Sciatic nerve (tissue), 2 donors: ENCODE measurements at regions of chr4 and their contacts with region 1.

Region 1: DNA sequence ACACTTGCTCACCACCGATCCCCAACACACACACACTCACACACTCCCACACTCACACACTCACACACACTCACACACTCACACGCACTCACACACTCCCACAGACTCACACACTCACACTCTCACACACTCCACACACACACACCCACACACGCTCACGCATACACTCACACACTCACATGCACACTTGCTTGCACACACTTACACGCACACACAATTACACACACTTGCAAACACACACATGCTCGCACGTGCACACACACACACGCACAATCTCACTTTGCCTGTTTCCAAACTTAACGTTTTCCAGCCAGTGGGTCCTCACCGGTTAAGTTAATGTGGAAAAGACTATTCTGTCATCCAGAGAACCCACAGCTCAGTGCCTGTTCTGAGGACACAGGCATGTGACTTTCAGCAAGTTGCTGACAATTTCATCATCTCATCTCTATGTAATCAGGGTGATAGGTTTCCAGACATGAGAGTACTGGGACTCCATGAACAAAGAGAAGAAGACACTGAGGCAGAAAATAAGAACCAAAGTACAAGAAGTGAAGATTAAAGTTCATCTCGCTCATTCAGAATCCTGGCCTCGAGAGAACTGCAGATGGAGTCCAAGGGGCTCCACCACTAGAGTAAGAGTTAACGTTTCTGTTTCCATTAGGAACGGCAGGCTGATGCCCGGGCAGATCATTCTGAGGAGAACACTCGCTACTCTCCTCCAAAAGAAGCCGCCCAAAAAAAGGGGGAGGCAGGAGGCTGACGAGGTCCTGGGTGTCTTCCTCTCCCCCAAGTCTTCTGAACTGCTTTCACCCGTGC is 153.2 kb upstream of the FRG1 start:
- DNase-seq: no peak
- ATAC-seq: no peak

Region 2: DNA sequence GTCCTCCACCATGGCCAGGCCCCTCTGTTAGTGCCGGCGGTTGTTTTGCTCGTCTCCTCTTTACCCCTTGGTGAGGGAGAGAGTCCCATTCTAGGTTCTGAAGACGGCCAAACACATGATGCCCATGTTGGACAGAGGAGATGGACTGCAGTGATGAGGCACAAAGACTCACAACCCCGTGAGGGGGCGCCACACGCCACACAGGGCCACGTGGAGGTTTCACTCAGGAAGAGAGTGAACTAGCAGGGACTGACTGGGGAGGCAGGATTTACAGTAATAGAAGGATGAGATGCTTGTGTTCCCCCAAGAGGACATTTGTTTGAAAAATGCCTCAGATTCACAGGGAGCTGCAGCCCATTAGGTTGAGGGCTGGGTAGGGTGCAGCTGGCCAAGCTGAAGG is 502.0 kb before region 1 on chr4:
- intact Hi-C with region 1: loop called (anchors 2 kb)
- DNase-seq: no peak
- ATAC-seq: no peak